ENCODE measurements at regions of chr2 and their contacts with region 1.

Region 1: GRCh38 chr2:30266051-30266621 is 34.8 kb downstream of the LBH start:
- DNase-seq: peak; percentile 65
- ATAC-seq: peak; percentile 92
- H3K4me3 Mint-ChIP-seq: peak overlapping the region; percentile 81
- H3K27ac Mint-ChIP-seq: peak overlapping the region; percentile 97
- H3K4me1 Mint-ChIP-seq: peaks cover 38% of the 10 kb centered on the region
- H3K27me3 Mint-ChIP-seq: no peaks in the 10 kb centered on the region

Region 2: DNA sequence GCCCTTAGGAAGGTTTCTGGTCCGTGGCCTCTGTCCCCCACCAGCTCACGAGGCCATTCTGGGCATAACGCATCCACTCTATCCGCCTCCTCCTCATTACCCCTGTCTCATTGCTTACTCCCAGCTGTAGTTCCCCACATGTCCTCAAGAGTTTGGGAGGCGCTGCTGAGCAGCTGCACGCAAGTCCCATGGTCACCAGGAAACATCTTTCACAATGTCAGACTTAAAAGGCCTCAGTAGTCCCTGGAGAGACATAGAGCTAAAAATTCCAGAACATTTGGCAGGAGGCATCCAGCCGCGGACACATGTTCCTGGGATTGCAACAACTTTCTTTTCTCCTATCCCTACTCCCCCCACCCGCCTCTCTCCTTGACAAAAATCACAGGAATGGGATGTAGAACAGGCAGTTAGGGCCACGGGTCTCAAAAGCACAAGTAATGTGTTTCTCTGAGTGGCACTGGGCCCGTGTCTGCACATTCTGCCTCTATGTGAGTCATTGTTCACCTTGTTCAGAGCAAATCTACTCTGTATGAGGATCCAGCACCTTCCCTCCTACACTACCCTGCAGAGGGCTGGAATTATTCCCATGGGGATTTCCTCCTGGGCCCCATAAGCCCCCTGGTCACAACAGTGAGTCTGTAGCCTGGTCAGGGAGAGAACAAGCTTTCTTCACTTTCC is 26.7 kb before region 1 on chr2:
- POLR2A ChIA-PET with region 1: interaction called, 73 read pairs
- DNase-seq: peak; percentile 82
- ATAC-seq: peak; percentile 37
- H3K4me3 Mint-ChIP-seq: peak overlapping the region; percentile 79
- H3K27ac Mint-ChIP-seq: peak overlapping the region; percentile 92
- H3K4me1 Mint-ChIP-seq: peaks cover 76% of the 10 kb centered on the region
- H3K27me3 Mint-ChIP-seq: no peaks in the 10 kb centered on the region

Region 3: DNA sequence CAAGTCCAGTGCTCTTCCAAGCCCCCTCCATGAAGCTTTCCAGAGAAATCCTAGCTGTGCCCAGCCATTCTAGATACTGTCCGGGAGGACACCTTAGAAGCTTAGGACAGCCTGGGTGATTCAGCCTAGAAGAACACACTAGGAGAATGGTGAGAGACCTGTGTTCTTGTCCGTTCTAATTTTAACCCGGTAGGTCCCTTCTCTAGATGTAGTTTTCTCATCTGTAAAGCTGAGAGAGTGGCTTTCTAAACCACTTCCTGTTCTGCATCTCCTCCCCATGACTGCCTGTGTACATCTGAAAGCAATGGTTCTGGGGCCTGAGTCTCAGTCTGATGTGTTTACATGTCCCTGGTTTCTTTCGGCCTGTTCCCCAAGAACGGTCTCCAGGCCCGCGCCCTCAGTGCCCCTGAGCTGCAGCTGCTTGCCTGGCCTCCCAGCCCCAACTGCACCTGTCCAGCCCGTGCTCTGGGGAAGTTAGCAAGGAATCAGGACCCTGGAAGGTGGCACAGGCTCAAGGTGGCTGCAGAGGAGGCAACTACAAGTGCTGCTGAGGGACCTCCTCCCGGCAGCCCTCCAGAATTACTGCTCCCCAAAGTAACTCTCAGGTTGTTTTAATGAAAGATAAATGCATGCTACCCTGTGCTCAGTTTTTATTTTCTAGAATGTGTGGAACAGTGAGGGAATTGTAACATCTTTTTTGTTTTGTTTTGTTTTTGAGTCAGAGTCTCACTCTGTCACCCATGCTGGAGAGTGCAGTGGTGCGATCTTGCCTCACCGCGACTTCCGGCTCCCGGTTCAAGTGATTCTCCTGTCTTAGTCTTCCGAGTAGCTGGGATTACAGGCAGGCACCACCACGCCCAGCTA is 71.1 kb after region 1 on chr2:
- POLR2A ChIA-PET with region 1: interaction called, 27 read pairs
- DNase-seq: peak; percentile 74
- ATAC-seq: peak; percentile 90
- H3K4me3 Mint-ChIP-seq: peak overlapping the region; percentile 83
- H3K27ac Mint-ChIP-seq: peak overlapping the region; percentile 97
- H3K4me1 Mint-ChIP-seq: peaks cover 61% of the 10 kb centered on the region
- H3K27me3 Mint-ChIP-seq: no peaks in the 10 kb centered on the region

Measured in activated naive CD8-positive, alpha-beta T cell treated with anti-CD3 and anti-CD28 coated beads, Interleukin-2, amount 10 ng/mL, durations not matched to agents 7 days and 5 days (primary cell).